Activated CD4-positive, alpha-beta T cell treated with anti-CD3 and anti-CD28 coated beads, Interleukin-2, amount 10 ng/mL, durations not matched to agents 7 days and 5 days (primary cell): ENCODE measurements at regions of chr17 and their contacts with region 1.

Region 1: GRCh38 chr17:41948762-41949460 is 17.7 kb upstream of the CNP start:
- DNase-seq: no peak
- H3K4me3 Mint-ChIP-seq: no peak overlapping the region
- H3K27ac Mint-ChIP-seq: no peak overlapping the region
- H3K4me1 Mint-ChIP-seq: no peaks in the 10 kb centered on the region
- H3K27me3 Mint-ChIP-seq: no peaks in the 10 kb centered on the region

Region 2: GRCh38 chr17:41510251-41511065 is 438.5 kb before region 1 on chr17:
- CTCF ChIA-PET with region 1: no interaction called
- POLR2A ChIA-PET with region 1: no interaction called
- DNase-seq: no peak
- H3K4me3 Mint-ChIP-seq: no peak overlapping the region
- H3K27ac Mint-ChIP-seq: no peak overlapping the region
- H3K4me1 Mint-ChIP-seq: no peaks in the 10 kb centered on the region
- H3K27me3 Mint-ChIP-seq: no peaks in the 10 kb centered on the region

Region 3: GRCh38 chr17:41918314-41919164 is 30.4 kb before region 1 on chr17 and contains the start of gene ACLY:
- CTCF ChIA-PET with region 1: no interaction called
- POLR2A ChIA-PET with region 1: no interaction called
- DNase-seq: peak; percentile 98
- H3K4me3 Mint-ChIP-seq: peak within 1 kb of the TSS; percentile 95
- H3K27ac Mint-ChIP-seq: peak within 1 kb of the TSS; percentile 96
- H3K4me1 Mint-ChIP-seq: peaks cover 38% of the 10 kb centered on the region
- H3K27me3 Mint-ChIP-seq: no peaks in the 10 kb centered on the region
- total RNA-seq, gene ACLY: 143 to 150 TPM

Region 4: DNA sequence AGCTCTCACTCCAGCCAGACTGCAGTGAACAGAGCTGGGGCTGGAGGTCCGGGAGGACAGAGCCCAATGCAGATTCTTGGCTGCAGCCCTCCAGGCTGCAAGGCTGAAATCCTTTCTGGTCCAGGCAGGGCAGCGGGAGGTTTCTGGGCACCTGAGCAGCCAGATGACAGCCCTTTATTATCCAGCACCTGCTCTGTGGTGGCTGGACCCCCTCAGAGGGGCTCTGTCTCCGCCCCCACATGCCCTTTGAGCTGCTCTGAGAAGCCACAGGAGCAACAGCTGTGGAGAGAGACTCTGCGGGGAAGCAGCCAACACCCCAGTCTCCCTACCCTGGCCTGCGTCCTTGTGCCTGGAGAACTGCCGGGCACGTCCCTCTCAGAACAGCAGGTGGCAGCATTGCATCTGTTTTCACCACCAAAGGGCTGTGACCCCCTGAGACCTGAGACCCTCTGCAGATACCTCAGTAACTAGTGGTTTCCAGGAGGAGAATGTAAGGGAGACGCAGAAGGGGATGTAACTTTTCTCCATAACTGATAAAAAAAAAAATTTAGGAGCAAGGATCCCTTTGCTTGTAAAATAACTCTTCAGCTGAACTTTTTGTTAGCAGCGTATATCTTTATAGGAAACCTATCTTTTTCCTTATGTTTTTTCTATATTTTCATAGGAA is 14.0 kb after region 1 on chr17:
- CTCF ChIA-PET with region 1: interaction called, 10 read pairs
- POLR2A ChIA-PET with region 1: no interaction called
- DNase-seq: peak; percentile 82
- H3K4me3 Mint-ChIP-seq: no peak overlapping the region
- H3K27ac Mint-ChIP-seq: no peak overlapping the region
- H3K4me1 Mint-ChIP-seq: peaks cover 23% of the 10 kb centered on the region
- H3K27me3 Mint-ChIP-seq: peaks cover 4% of the 10 kb centered on the region

Region 5: GRCh38 chr17:42120770-42121769 is 172.2 kb after region 1 on chr17 and contains the start of gene KAT2A:
- CTCF ChIA-PET with region 1: no interaction called
- POLR2A ChIA-PET with region 1: no interaction called
- DNase-seq: peak; percentile 75
- H3K4me3 Mint-ChIP-seq: peak within 1 kb of the TSS; percentile 67
- H3K27ac Mint-ChIP-seq: peak within 1 kb of the TSS; percentile 73
- H3K4me1 Mint-ChIP-seq: peaks cover 31% of the 10 kb centered on the region
- H3K27me3 Mint-ChIP-seq: no peaks in the 10 kb centered on the region
- total RNA-seq, gene KAT2A: 47.9 to 48.3 TPM